Naive thymus-derived CD4-positive, alpha-beta T cell (primary cell): ENCODE measurements at regions of chr12 and their contacts with region 1.

Region 1: GRCh38 chr12:120086801-120087621 is 29.5 kb downstream of the RAB35 start:
- DNase-seq: peak; percentile 98 to 100 (median 99)
- ATAC-seq: peak; percentile 97
- H3K4me3 ChIP-seq: peak overlapping the region; percentile 70
- H3K4me3 Mint-ChIP-seq: peak overlapping the region; percentile 70 to 88 (median 82)
- H3K27ac ChIP-seq: peak overlapping the region; percentile 60
- H3K27ac Mint-ChIP-seq: peak overlapping the region; percentile 71 to 93 (median 89)
- H3K4me1 ChIP-seq: peaks cover 5 to 8% of the 10 kb centered on the region in 2 donors
- H3K4me1 Mint-ChIP-seq: peaks cover 5 to 39% (median 16%) of the 10 kb centered on the region in 7 donors
- H3K27me3 ChIP-seq: no peaks in the 10 kb centered on the region
- H3K27me3 Mint-ChIP-seq: peaks cover 0 to 3% (median 0%) of the 10 kb centered on the region in 5 donors

Region 2: DNA sequence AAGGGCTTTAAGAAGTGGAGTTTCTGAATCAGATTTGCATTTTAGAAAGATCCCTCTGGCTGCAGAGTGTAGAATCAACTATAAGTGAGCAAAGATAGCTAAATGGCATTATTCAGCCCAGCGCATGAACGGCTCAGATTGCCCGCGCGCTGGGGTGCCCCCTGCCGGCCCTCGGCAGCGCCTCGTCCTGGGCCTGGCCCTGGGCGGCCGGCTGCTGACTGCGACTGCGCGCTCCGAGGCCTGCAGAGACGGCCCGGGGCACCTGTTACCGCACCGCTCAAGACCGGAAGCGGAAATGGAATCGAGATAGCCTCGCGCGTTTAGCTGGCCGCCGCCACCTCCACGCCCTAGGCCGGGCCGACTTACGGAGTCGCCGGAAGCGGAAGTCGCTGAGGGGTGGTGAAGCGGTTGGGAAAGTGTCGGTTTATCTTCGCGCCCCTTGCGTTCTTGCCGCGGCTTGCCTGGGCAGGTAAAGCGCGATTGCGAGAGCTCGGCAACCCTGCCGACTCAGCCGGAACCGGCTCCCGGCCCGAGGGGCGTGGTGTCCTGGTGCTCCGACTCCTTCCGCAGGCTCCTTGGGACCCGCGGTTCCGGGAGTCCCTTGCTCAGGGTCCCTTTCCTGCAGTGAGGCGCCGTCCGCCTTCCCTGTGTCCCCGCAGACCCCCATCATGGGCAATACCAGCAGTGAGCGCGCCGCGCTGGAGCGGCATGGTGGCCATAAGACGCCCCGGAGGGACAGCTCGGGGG is 419.3 kb before region 1 on chr12 and contains the start of gene PRKAB1:
- CTCF ChIA-PET with region 1: no interaction called
- POLR2A ChIA-PET with region 1: no interaction called
- intact Hi-C with region 1: loop called (anchors 1 to 5 kb)
- DNase-seq: peak; percentile 91 to 96 (median 93)
- ATAC-seq: peak; percentile 96
- H3K4me3 ChIP-seq: peak within 1 kb of the TSS; percentile 81
- H3K4me3 Mint-ChIP-seq: peak within 1 kb of the TSS; percentile 85 to 98 (median 88)
- H3K27ac ChIP-seq: peak within 1 kb of the TSS; percentile 76
- H3K27ac Mint-ChIP-seq: peak within 1 kb of the TSS; percentile 77 to 96 (median 92)
- H3K4me1 ChIP-seq: peaks cover 20 to 30% of the 10 kb centered on the region in 2 donors
- H3K4me1 Mint-ChIP-seq: peaks cover 27 to 63% (median 55%) of the 10 kb centered on the region in 7 donors
- H3K27me3 ChIP-seq: no peaks in the 10 kb centered on the region
- H3K27me3 Mint-ChIP-seq: no peaks in the 10 kb centered on the region
- total RNA-seq, gene PRKAB1: 23.5 to 48.7 (median 43.3) TPM

Region 3: GRCh38 chr12:119758722-119759121 is 328.3 kb before region 1 on chr12:
- CTCF ChIA-PET with region 1: no interaction called
- POLR2A ChIA-PET with region 1: no interaction called
- intact Hi-C with region 1: no loop called
- DNase-seq: no peak
- ATAC-seq: no peak
- H3K4me3 ChIP-seq: no peak overlapping the region
- H3K4me3 Mint-ChIP-seq: no peak overlapping the region
- H3K27ac ChIP-seq: no peak overlapping the region
- H3K27ac Mint-ChIP-seq: no peak overlapping the region
- H3K4me1 ChIP-seq: no peaks in the 10 kb centered on the region
- H3K4me1 Mint-ChIP-seq: no peaks in the 10 kb centered on the region
- H3K27me3 ChIP-seq: no peaks in the 10 kb centered on the region
- H3K27me3 Mint-ChIP-seq: no peaks in the 10 kb centered on the region

Region 4: DNA sequence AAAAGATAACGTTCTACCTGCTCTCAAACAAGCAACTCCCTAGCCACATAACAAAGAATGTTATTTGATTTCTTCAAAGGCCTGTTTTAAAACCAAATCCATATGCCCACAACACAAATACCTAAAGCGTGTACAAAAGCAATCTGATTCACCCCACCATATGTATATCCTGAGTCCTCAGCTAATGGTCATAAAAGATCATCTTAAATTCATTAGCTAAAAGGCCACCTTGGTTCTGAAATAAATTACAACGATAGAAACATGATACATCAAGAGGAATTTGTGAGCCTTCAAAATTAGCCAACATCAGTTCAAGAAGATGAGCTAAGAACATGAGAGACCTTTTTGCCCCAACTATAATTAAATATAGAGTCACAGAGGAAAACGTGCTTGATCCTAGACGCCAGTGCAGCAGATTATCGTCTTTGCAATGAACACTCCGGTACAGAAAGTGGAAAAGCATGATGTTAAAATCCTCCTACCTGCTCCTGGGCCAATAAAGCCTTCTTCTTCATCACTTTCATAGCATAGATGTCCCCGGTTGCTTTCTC is 229.9 kb before region 1 on chr12:
- CTCF ChIA-PET with region 1: no interaction called
- POLR2A ChIA-PET with region 1: no interaction called
- intact Hi-C with region 1: no loop called
- DNase-seq: no peak
- ATAC-seq: no peak
- H3K4me3 ChIP-seq: no peak overlapping the region
- H3K4me3 Mint-ChIP-seq: no peak overlapping the region
- H3K27ac ChIP-seq: no peak overlapping the region
- H3K27ac Mint-ChIP-seq: no peak overlapping the region
- H3K4me1 ChIP-seq: peaks cover 0 to 5% of the 10 kb centered on the region in 2 donors
- H3K4me1 Mint-ChIP-seq: peaks cover 7 to 18% (median 15%) of the 10 kb centered on the region in 7 donors
- H3K27me3 ChIP-seq: no peaks in the 10 kb centered on the region
- H3K27me3 Mint-ChIP-seq: no peaks in the 10 kb centered on the region

Region 5: GRCh38 chr12:119902084-119902509 is 184.9 kb before region 1 on chr12:
- CTCF ChIA-PET with region 1: no interaction called
- POLR2A ChIA-PET with region 1: no interaction called
- intact Hi-C with region 1: loop called in 1 of 2 experiments (anchors 1 kb)
- DNase-seq: peak; percentile 19 to 69 (median 61)
- ATAC-seq: peak; percentile 98
- H3K4me3 ChIP-seq: no peak overlapping the region
- H3K4me3 Mint-ChIP-seq: no peak overlapping the region
- H3K27ac ChIP-seq: no peak overlapping the region
- H3K27ac Mint-ChIP-seq: no peak overlapping the region
- H3K4me1 ChIP-seq: no peaks in the 10 kb centered on the region
- H3K4me1 Mint-ChIP-seq: peaks cover 0 to 8% (median 6%) of the 10 kb centered on the region in 7 donors
- H3K27me3 ChIP-seq: no peaks in the 10 kb centered on the region
- H3K27me3 Mint-ChIP-seq: peaks cover 0 to 6% (median 0%) of the 10 kb centered on the region in 5 donors

Region 6: GRCh38 chr12:119938049-119938667 is 148.9 kb before region 1 on chr12:
- CTCF ChIA-PET with region 1: no interaction called
- POLR2A ChIA-PET with region 1: no interaction called
- intact Hi-C with region 1: loop called (anchors 1 to 2 kb)
- DNase-seq: peak; percentile 28 to 67 (median 51)
- ATAC-seq: peak; percentile 89
- H3K4me3 ChIP-seq: no peak overlapping the region
- H3K4me3 Mint-ChIP-seq: no peak overlapping the region
- H3K27ac ChIP-seq: no peak overlapping the region
- H3K27ac Mint-ChIP-seq: no peak overlapping the region
- H3K4me1 ChIP-seq: no peaks in the 10 kb centered on the region
- H3K4me1 Mint-ChIP-seq: no peaks in the 10 kb centered on the region
- H3K27me3 ChIP-seq: no peaks in the 10 kb centered on the region
- H3K27me3 Mint-ChIP-seq: peaks cover 0 to 7% (median 0%) of the 10 kb centered on the region in 5 donors

Region 7: DNA sequence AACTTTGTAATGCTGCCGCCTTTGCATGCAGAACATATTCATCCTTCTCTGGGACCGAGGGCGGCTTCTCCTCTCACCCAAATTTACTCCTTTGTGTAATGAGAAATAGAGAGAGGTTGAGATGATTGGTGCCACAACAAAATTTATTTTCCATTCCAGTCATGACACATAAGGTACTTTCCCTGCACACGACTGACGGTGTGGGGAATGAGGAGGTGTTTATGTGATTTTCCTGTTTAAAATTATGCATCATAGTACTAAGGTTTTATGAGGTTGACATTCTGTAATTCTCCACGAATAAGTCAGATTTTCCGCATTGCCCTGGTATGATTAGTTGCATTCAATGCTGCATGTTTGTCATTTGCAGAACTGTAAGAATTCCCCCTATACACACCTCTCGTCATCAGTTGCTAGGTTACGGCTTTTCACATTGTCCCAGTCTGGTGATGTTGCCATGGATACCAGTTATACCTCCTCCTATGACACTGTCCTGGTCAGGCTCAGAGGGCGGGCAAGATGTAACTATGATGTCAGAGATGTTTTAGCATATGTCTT is 74.9 kb before region 1 on chr12:
- CTCF ChIA-PET with region 1: interaction called, 4 read pairs
- POLR2A ChIA-PET with region 1: interaction called, 10 read pairs
- intact Hi-C with region 1: loop called (anchors 1 kb)
- DNase-seq: peak in 8 of 9 donors; percentile 31 to 98 (median 74)
- ATAC-seq: peak; percentile 78
- H3K4me3 ChIP-seq: peak overlapping the region; percentile 33
- H3K4me3 Mint-ChIP-seq: peak overlapping the region; percentile 8 to 86 (median 74)
- H3K27ac ChIP-seq: peak overlapping the region; percentile 93
- H3K27ac Mint-ChIP-seq: peak overlapping the region; percentile 93 to 100 (median 96)
- H3K4me1 ChIP-seq: peaks cover 73 to 79% of the 10 kb centered on the region in 2 donors
- H3K4me1 Mint-ChIP-seq: peaks cover 41 to 94% (median 82%) of the 10 kb centered on the region in 7 donors
- H3K27me3 ChIP-seq: no peaks in the 10 kb centered on the region
- H3K27me3 Mint-ChIP-seq: no peaks in the 10 kb centered on the region

Region 8: GRCh38 chr12:120110550-120111501 is 23.8 kb after region 1 on chr12:
- CTCF ChIA-PET with region 1: no interaction called
- POLR2A ChIA-PET with region 1: interaction called, 3 read pairs
- intact Hi-C with region 1: loop called (anchors 1 kb)
- DNase-seq: peak in 8 of 9 donors; percentile 34 to 58 (median 51)
- ATAC-seq: peak; percentile 90
- H3K4me3 ChIP-seq: peak overlapping the region; percentile 44
- H3K4me3 Mint-ChIP-seq: peak overlapping the region; percentile 72 to 90 (median 78)
- H3K27ac ChIP-seq: peak overlapping the region; percentile 62
- H3K27ac Mint-ChIP-seq: peak overlapping the region; percentile 44 to 93 (median 81)
- H3K4me1 ChIP-seq: peaks cover 45 to 52% of the 10 kb centered on the region in 2 donors
- H3K4me1 Mint-ChIP-seq: peaks cover 50 to 86% (median 72%) of the 10 kb centered on the region in 7 donors
- H3K27me3 ChIP-seq: no peaks in the 10 kb centered on the region
- H3K27me3 Mint-ChIP-seq: no peaks in the 10 kb centered on the region

Region 9: GRCh38 chr12:120132863-120133385 is 45.9 kb after region 1 on chr12:
- CTCF ChIA-PET with region 1: no interaction called
- POLR2A ChIA-PET with region 1: no interaction called
- intact Hi-C with region 1: no loop called
- DNase-seq: no peak
- ATAC-seq: peak; percentile 29
- H3K4me3 ChIP-seq: no peak overlapping the region
- H3K4me3 Mint-ChIP-seq: no peak overlapping the region
- H3K27ac ChIP-seq: no peak overlapping the region
- H3K27ac Mint-ChIP-seq: peak overlapping the region in 1 of 9 donors; percentile 41
- H3K4me1 ChIP-seq: no peaks in the 10 kb centered on the region
- H3K4me1 Mint-ChIP-seq: no peaks in the 10 kb centered on the region
- H3K27me3 ChIP-seq: no peaks in the 10 kb centered on the region
- H3K27me3 Mint-ChIP-seq: no peaks in the 10 kb centered on the region

Region 10: GRCh38 chr12:120175062-120175461 is 88.1 kb after region 1 on chr12:
- CTCF ChIA-PET with region 1: no interaction called
- POLR2A ChIA-PET with region 1: no interaction called
- intact Hi-C with region 1: no loop called
- DNase-seq: no peak
- ATAC-seq: no peak
- H3K4me3 ChIP-seq: no peak overlapping the region
- H3K4me3 Mint-ChIP-seq: no peak overlapping the region
- H3K27ac ChIP-seq: no peak overlapping the region
- H3K27ac Mint-ChIP-seq: no peak overlapping the region
- H3K4me1 ChIP-seq: no peaks in the 10 kb centered on the region
- H3K4me1 Mint-ChIP-seq: peaks cover 0 to 1% (median 0%) of the 10 kb centered on the region in 7 donors
- H3K27me3 ChIP-seq: no peaks in the 10 kb centered on the region
- H3K27me3 Mint-ChIP-seq: no peaks in the 10 kb centered on the region

Region 11: GRCh38 chr12:120194534-120195395 is 107.8 kb after region 1 on chr12 and contains the start of gene GCN1:
- CTCF ChIA-PET with region 1: no interaction called
- POLR2A ChIA-PET with region 1: interaction called, 13 read pairs
- intact Hi-C with region 1: no loop called
- DNase-seq: peak; percentile 77 to 97 (median 89)
- ATAC-seq: peak; percentile 93
- H3K4me3 ChIP-seq: peak within 1 kb of the TSS; percentile 96
- H3K4me3 Mint-ChIP-seq: peak within 1 kb of the TSS; percentile 82 to 96 (median 90)
- H3K27ac ChIP-seq: peak within 1 kb of the TSS; percentile 88
- H3K27ac Mint-ChIP-seq: peak within 1 kb of the TSS; percentile 87 to 95 (median 93)
- H3K4me1 ChIP-seq: peaks cover 20 to 26% of the 10 kb centered on the region in 2 donors
- H3K4me1 Mint-ChIP-seq: peaks cover 27 to 60% (median 44%) of the 10 kb centered on the region in 7 donors
- H3K27me3 ChIP-seq: no peaks in the 10 kb centered on the region
- H3K27me3 Mint-ChIP-seq: no peaks in the 10 kb centered on the region
- total RNA-seq, gene GCN1: 90.6 to 142 (median 132) TPM